Calu3 (cell line): ENCODE measurements at regions of chr6 and their contacts with region 1.

Region 1: DNA sequence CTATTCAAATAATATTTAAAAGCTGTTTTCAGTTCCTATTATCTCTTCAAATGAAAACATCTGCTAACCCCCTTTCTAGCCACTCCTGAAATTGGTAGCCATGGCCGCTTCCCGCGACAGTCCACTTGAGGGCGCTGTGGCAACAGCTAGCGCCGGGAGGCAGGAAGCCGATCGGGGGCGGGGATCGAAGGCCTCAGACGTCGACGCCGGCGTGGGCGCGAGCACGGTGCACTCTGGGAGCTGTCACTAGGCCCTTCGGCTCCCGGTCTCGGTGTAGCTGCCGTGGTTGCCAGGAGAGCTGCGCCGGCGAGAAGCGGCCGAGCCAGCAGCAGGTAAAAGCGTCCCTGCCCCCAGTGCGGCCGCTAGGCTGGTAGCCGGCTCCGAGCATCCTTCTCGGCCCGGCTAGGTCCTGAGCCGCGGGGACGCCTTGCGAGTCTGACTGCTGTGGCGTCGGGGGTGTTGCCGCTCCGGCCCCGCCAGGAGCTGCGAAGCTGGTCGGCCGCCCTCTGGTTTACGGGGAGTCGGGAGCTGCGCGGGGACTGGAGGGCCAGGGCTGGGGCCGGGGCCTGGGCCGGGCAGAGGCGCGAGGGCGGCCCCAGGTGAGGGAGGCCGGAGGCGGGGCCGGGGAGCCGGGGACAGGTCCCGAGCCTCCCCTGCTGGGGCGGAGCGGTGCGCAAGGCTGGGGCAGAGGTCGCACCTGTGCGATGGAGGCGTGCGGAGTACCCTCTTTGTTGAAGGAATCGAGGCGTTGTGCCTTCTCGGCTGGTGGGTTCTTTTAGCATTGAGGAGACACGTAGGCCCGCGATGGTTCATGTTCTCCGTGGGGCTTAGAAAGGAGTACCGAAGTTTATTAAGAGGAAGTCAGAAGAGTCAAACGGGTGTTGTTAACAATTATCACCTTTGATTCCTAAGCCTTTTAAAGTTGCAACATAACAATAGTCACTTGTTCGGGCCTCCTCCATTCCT is at the start of gene DOP1A:
- DNase-seq: peak; percentile 96
- H3K4me3 Mint-ChIP-seq: peak within 1 kb of the TSS; percentile 85
- H3K27ac Mint-ChIP-seq: peak within 1 kb of the TSS; percentile 87
- H3K4me1 Mint-ChIP-seq: peaks cover 23% of the 10 kb centered on the region
- H3K27me3 Mint-ChIP-seq: no peaks in the 10 kb centered on the region
- CTCF ChIP-seq: peak; percentile 90
- total RNA-seq, gene DOP1A: 23.7 and 24.4 TPM in 2 replicates

Region 2: GRCh38 chr6:82646214-82646580 is 421.5 kb before region 1 on chr6:
- CTCF ChIA-PET with region 1: no interaction called
- intact Hi-C with region 1: no loop called
- DNase-seq: no peak
- H3K4me3 Mint-ChIP-seq: no peak overlapping the region
- H3K27ac Mint-ChIP-seq: no peak overlapping the region
- H3K4me1 Mint-ChIP-seq: no peaks in the 10 kb centered on the region
- H3K27me3 Mint-ChIP-seq: no peaks in the 10 kb centered on the region
- CTCF ChIP-seq: no peak

Region 3: GRCh38 chr6:82971877-82972460 is 95.8 kb before region 1 on chr6:
- CTCF ChIA-PET with region 1: no interaction called
- intact Hi-C with region 1: no loop called
- DNase-seq: no peak
- H3K4me3 Mint-ChIP-seq: no peak overlapping the region
- H3K27ac Mint-ChIP-seq: no peak overlapping the region
- H3K4me1 Mint-ChIP-seq: no peaks in the 10 kb centered on the region
- H3K27me3 Mint-ChIP-seq: no peaks in the 10 kb centered on the region
- CTCF ChIP-seq: no peak

Region 4: DNA sequence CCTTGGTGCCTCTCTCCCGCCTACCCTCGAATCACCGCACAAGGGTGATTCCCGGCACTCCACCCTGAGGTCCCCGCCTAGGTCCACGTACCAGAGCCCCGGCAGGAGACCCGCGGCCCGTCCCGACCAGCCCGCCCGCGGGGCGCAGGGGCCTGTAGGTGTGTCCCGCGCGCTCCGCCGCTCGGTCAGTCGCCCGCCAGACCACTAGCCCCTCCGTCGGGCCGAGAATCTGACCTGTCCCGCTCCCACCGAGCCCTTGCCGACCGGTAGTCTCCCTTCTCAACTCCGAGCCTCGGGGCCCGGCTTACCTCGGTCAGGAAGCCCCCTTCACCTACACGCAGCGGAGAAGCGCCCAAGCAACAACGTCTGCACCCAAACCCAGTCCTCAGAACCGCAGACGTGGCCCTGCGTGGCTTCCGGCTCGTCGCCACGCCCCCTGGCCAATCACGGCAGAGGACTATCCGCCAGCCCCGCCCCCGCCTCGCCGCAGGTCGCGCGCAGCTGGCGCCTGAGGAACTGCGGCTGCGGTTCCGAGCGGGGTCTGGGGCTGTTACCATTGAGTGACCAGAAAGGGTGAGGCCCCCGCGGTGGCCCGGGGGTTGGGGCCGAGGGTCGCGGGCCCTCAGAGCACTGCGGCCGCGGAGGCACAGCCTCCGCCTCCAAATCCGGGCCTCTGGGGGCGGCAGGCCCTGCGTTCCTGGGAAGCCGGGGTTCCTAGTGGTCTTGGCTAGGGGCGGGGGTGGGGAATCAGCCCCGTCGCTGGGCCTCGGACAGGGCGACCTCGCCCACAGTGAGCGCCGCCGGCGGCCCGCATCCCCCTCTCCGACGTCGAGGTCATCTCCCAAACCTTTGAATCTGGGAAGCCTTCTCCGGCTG is 125.4 kb after region 1 on chr6 and contains the starts of genes PGM3 and RWDD2A:
- CTCF ChIA-PET with region 1: no interaction called
- intact Hi-C with region 1: loop called (anchors 5 kb)
- DNase-seq: peak; percentile 91
- H3K4me3 Mint-ChIP-seq: peak within 1 kb of the TSS; percentile 99
- H3K27ac Mint-ChIP-seq: peak within 1 kb of the TSS; percentile 94
- H3K4me1 Mint-ChIP-seq: no peaks in the 10 kb centered on the region
- H3K27me3 Mint-ChIP-seq: no peaks in the 10 kb centered on the region
- CTCF ChIP-seq: no peak
- total RNA-seq, gene PGM3: 41.2 and 46.6 TPM in 2 replicates
- total RNA-seq, gene RWDD2A: 3.2 and 4.0 TPM in 2 replicates

Region 5: GRCh38 chr6:83215131-83216047 is 147.7 kb after region 1 on chr6:
- CTCF ChIA-PET with region 1: interaction called, 19 read pairs
- intact Hi-C with region 1: loop called (anchors 1 kb)
- DNase-seq: peak; percentile 55
- H3K4me3 Mint-ChIP-seq: no peak overlapping the region
- H3K27ac Mint-ChIP-seq: no peak overlapping the region
- H3K4me1 Mint-ChIP-seq: no peaks in the 10 kb centered on the region
- H3K27me3 Mint-ChIP-seq: no peaks in the 10 kb centered on the region
- CTCF ChIP-seq: peak; percentile 65

Region 6: DNA sequence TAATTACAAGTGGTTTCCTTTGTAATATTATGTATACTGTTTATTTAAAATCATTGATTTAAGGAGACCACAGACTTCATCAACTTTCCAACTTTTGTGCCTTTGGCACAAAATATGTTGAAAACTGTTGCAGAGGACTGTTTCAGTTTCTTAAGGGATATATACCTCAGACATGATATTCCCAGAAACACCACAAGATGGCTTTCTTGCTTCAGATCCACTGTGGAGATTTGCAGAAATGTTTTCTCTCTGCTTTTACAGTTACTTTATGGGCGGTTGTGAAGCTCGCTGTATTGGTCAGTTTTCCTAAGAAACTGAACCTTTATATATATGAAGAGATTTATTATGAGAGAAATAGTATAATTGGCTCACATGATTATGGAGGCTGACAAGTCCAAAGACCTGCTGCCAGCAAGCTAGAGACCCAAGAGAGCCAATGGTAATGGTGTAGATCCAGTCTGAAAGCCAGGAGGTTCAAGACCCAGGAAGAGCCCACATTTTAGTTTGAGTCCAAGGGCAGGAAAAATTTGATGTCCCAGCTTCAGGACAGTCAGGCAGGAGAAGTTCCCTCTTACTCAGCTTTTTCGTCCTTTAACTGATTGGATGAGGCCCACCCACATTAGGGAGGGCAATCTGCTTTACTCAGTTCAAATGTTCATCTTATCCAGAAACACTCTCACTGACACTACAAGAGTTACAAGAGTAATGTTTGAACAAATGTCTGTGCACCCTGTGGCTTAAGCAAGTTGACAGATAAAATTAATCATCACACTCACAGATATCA is 350.3 kb after region 1 on chr6:
- CTCF ChIA-PET with region 1: no interaction called
- intact Hi-C with region 1: loop called (anchors 10 kb)
- DNase-seq: peak; percentile 16
- H3K4me3 Mint-ChIP-seq: no peak overlapping the region
- H3K27ac Mint-ChIP-seq: no peak overlapping the region
- H3K4me1 Mint-ChIP-seq: no peaks in the 10 kb centered on the region
- H3K27me3 Mint-ChIP-seq: no peaks in the 10 kb centered on the region
- CTCF ChIP-seq: peak; percentile 44

Region 7: DNA sequence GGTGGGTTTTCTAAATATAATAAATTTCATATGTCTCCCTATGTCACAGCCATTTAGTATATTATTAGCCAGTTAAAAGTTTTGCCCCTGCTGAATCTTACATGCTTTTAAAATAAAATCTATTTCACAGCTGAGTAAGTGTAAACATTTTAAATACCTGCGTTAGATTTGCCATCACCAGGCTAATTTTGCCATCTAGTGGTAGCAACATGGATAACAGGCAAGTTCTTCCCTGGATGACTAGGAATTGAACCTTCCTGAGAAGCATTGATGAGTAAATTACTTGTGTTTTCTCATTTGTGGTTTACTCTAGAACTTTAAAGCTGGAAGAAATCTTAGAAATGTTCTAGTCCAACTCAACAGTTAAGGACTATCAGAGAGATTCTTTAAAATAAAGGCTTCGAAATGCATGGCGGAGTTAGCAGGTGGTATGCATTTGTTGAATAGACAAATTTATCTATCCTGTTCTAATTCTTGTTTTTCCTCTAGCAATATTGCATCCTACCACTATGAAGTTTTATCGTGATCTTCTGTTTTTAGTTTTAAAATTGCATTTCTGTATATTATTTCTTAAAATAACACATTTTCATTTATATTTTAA is 447.2 kb after region 1 on chr6:
- CTCF ChIA-PET with region 1: interaction called, 5 read pairs
- intact Hi-C with region 1: loop called (anchors 2 kb)
- DNase-seq: peak; percentile 56
- H3K4me3 Mint-ChIP-seq: no peak overlapping the region
- H3K27ac Mint-ChIP-seq: no peak overlapping the region
- H3K4me1 Mint-ChIP-seq: no peaks in the 10 kb centered on the region
- H3K27me3 Mint-ChIP-seq: no peaks in the 10 kb centered on the region
- CTCF ChIP-seq: peak; percentile 83